ENCODE measurements at regions of chr20 and their contacts with region 1.

Region 1: GRCh38 chr20:44747166-44748004 is 1.7 kb downstream of the KCNK15 start:
- H3K4me3 ChIP-seq: no peak overlapping the region
- H3K27ac ChIP-seq: peak overlapping the region; percentile 24; the same call in 1 of the 2 replicates
- H3K4me1 ChIP-seq: peaks cover 4% of the 10 kb centered on the region; the same call in 1 of the 2 replicates
- CTCF ChIP-seq: peak; percentile 78

Region 2: DNA sequence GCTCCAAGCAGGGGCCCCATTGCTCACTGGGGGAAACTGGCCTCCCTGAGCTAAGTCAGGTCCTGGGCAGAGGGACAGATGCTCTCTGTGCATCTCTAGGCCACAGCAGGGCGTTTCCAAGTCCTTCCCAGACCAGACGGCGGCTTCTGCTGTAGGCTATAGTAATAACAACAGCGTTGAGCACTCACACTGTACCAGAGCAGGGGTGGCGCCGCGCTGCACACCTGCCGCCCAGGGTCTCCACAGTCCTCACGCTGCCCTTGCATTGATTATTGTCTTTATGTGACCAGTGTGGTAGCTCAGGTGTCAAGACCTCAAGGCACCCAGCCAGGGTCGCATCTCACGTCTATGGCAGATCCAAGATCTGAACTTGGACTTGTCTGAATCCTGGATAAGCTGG is 47.1 kb before region 1 on chr20:
- CTCF ChIA-PET with region 1: no interaction called
- POLR2A ChIA-PET with region 1: no interaction called
- H3K4me3 ChIP-seq: no peak overlapping the region
- H3K27ac ChIP-seq: no peak overlapping the region
- H3K4me1 ChIP-seq: no peaks in the 10 kb centered on the region
- CTCF ChIP-seq: no peak

Region 3: GRCh38 chr20:44733341-44734069 is 13.9 kb before region 1 on chr20:
- CTCF ChIA-PET with region 1: interaction called, 21 read pairs
- POLR2A ChIA-PET with region 1: no interaction called
- H3K4me3 ChIP-seq: no peak overlapping the region
- H3K27ac ChIP-seq: no peak overlapping the region
- H3K4me1 ChIP-seq: peaks cover 7% of the 10 kb centered on the region
- CTCF ChIP-seq: peak; percentile 83

Region 4: GRCh38 chr20:44758247-44759101 is 11.1 kb after region 1 on chr20:
- CTCF ChIA-PET with region 1: interaction called, 11 read pairs
- POLR2A ChIA-PET with region 1: no interaction called
- H3K4me3 ChIP-seq: no peak overlapping the region
- H3K27ac ChIP-seq: no peak overlapping the region
- H3K4me1 ChIP-seq: no peaks in the 10 kb centered on the region
- CTCF ChIP-seq: no peak

Region 5: DNA sequence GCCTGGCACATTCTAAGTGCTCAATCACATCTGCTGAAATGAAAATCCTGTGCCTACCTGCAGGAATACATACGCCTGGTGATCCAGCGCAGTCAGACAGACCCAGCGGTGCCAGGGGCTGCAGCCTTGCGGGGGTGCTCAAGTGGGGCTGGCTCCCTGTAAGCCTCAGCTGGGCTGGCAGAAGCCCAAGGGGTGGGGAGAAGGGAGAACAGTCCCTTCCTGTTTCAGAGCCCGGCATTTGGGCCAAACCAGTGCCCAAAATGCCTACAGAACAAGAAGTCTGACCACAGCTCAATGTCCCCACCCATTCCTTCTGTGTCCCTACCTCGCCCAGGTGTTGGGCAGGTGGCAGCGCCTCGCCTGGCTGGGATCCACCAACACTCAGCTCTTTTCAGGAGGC is 20.9 kb after region 1 on chr20:
- CTCF ChIA-PET with region 1: interaction called, 14 read pairs
- POLR2A ChIA-PET with region 1: no interaction called
- H3K4me3 ChIP-seq: no peak overlapping the region
- H3K27ac ChIP-seq: no peak overlapping the region
- H3K4me1 ChIP-seq: no peaks in the 10 kb centered on the region
- CTCF ChIP-seq: no peak

Region 6: GRCh38 chr20:44861531-44862006 is 114.2 kb after region 1 on chr20:
- CTCF ChIA-PET with region 1: interaction called, 26 read pairs
- POLR2A ChIA-PET with region 1: no interaction called
- H3K4me3 ChIP-seq: no peak overlapping the region
- H3K27ac ChIP-seq: peak overlapping the region; percentile 24; the same call in 1 of the 2 replicates
- H3K4me1 ChIP-seq: no peaks in the 10 kb centered on the region
- CTCF ChIP-seq: no peak

Region 7: DNA sequence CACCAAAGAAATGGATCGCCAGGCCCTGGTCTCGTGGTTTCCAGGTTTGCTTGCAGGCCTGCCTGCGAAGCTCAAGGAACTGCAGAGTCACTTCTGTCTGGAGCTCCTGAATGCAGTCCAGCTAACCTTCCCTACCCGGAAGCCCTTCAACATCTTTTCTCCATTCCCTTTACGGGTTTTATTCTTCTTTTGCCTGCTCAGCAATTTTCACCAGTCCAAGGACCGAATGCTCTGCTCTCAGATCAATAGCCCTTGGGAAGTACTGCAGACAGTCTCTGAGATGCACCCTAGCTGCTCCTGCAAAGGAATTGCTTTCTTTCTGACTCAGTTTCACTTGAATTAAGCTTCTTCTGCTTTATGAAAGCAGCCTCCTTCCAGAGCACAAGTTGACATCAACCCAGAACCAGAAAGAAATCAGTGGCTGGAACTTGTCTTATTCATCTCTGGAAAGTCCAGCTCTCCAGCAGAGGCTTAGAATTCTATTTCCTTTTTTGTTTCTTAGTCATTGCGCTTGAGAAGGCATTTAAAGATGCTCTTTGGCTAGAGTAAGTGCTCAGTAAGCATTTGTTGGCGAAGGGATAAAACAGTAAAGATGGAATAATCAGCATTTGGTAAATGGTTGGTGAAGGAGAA is 119.4 kb after region 1 on chr20:
- CTCF ChIA-PET with region 1: interaction called, 26 read pairs
- POLR2A ChIA-PET with region 1: no interaction called
- H3K4me3 ChIP-seq: no peak overlapping the region
- H3K27ac ChIP-seq: no peak overlapping the region
- H3K4me1 ChIP-seq: no peaks in the 10 kb centered on the region
- CTCF ChIP-seq: no peak

Region 8: DNA sequence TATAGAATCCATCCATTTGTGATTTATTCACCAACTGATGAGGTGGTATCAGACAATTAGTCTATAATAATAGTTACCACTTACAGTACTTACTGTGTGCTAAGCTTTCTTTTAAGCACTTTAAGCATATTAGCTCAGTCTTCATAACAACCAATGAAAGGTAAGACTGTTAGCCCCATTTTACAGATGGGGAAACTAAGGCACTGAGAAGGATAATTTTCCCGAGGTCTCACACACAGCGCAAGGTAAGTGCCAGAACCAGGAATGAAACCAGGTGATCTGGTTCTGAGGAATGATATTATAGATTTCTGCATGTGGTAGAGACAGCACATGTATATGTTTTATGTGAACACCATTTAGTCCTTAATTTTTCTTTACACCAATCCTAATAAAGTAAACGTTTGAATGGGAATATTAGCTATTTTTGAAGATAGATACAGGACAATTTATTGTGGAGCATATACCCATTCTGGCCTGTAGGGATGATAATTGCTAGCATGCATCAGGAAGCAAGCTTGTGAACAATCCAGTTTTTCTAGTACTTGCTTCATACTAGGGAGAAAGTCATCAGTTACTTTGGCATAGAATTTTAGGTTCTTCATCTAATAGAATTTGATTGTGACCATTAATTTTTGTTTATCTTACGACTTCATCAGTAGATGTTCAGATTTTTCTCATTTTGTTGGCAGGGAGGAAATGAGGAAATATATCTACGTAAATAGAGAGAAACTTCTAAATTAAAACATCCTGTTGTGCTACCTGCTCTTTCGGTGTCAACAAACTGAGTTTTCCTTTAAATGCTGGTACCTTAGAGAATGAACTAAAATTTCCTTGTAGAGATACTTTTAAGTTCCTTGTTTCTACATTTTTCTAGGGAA is 141.1 kb after region 1 on chr20:
- CTCF ChIA-PET with region 1: interaction called, 16 read pairs
- POLR2A ChIA-PET with region 1: interaction called, 4 read pairs
- H3K4me3 ChIP-seq: no peak overlapping the region; the same call in 1 of the 2 replicates
- H3K27ac ChIP-seq: no peak overlapping the region
- H3K4me1 ChIP-seq: peaks cover 4% of the 10 kb centered on the region; the same call in 1 of the 2 replicates
- CTCF ChIP-seq: no peak

Measured in HEK293 (cell line).